Ascending aorta (tissue), 2 donors: ENCODE measurements at regions of chr4 and their contacts with region 1.

Region 1: GRCh38 chr4:38319456-38320342 is 344.3 kb upstream of the KLF3 start:
- DNase-seq: peak; percentile 75 to 97
- H3K4me3 ChIP-seq: peak overlapping the region; percentile 46 to 52
- H3K27ac ChIP-seq: peak overlapping the region; percentile 83 to 87
- H3K4me1 ChIP-seq: peaks cover 9 to 15% of the 10 kb centered on the region in 2 donors
- H3K27me3 ChIP-seq: no peaks in the 10 kb centered on the region
- CTCF ChIP-seq: peak; percentile 96 to 100 (median 99)

Region 2: DNA sequence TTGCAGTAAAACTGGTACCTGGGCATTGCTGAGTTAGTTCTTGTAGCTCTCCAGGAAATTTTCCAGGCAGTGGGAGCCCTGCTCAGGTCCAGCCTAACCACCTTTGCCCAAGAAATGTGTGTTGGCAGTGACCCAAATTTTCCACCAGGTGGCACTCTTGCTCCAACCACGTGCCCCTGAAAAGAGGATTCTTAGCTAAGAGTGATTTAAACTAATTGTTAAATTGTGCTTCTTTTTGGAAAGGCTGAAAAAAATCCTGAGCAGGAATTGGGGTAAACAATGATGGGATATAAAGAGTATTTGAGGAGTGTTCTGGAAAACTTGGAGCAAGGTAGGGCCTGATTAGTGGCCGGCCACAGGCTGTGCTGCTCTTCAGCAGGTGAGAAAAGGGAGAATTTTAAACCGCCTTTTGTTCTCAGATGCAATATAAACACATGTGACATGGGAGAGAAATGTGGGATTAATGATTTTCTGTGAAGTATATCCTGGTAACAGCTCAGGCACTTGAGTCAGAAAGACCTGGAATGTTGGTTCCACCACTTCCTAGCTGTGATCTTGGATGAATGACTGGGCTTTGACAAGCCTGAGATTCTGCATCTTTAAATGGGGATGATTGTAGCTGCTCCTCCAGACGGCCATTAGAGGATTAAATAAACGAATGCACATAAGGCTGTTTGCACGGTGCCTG is 139.9 kb before region 1 on chr4:
- intact Hi-C with region 1: loop called (anchors 2 kb)
- DNase-seq: peak in 1 of 2 donors; percentile 90
- H3K4me3 ChIP-seq: no peak overlapping the region
- H3K27ac ChIP-seq: no peak overlapping the region
- H3K4me1 ChIP-seq: peaks cover 4% of the 10 kb centered on the region in 2 donors
- H3K27me3 ChIP-seq: no peaks in the 10 kb centered on the region
- CTCF ChIP-seq: peak; percentile 88 to 94 (median 88)

Region 3: DNA sequence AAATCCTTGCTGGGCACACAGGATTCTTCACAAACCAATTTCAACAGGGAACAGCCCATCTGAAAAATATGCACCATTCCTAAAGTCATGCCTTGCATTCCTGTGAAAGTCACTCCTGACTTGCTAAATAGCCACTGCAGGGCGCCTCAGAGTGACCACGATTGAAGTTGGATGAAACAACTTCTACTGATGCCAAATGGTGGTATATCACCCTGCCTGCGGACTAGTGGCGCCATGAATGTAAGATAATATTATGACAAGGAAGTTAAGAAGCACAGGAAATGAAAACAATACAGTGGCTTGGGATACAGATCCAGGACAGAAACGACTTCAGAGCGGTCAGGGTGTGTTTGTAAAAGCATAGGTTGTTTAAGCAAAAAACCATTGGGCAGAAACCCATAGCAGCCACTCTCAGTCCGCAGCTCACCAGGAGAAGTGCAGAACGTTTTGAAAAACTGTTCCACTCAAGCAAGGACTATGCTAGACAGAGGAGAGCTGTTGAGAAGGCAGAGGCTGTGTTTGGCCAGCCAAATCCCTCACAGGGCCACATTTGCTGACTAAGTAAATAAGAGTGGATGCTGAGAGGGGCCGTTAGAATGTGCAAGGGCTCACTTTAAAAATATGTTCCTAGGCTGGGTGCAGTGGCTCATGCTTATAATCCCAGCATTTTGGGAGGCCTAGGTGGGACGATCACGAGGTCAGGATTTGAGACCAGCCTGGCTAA is 109.1 kb before region 1 on chr4:
- intact Hi-C with region 1: loop called (anchors 2 kb)
- DNase-seq: peak in 1 of 2 donors; percentile 72
- H3K4me3 ChIP-seq: peak overlapping the region in 1 of 2 donors; percentile 21
- H3K27ac ChIP-seq: peak overlapping the region; percentile 76 to 89
- H3K4me1 ChIP-seq: peaks cover 0 to 17% of the 10 kb centered on the region in 2 donors
- H3K27me3 ChIP-seq: no peaks in the 10 kb centered on the region
- CTCF ChIP-seq: no peak

Region 4: GRCh38 chr4:38430841-38431240 is 111.1 kb after region 1 on chr4:
- intact Hi-C with region 1: no loop called
- DNase-seq: no peak
- H3K4me3 ChIP-seq: no peak overlapping the region
- H3K27ac ChIP-seq: no peak overlapping the region
- H3K4me1 ChIP-seq: no peaks in the 10 kb centered on the region
- H3K27me3 ChIP-seq: no peaks in the 10 kb centered on the region
- CTCF ChIP-seq: no peak

Region 5: DNA sequence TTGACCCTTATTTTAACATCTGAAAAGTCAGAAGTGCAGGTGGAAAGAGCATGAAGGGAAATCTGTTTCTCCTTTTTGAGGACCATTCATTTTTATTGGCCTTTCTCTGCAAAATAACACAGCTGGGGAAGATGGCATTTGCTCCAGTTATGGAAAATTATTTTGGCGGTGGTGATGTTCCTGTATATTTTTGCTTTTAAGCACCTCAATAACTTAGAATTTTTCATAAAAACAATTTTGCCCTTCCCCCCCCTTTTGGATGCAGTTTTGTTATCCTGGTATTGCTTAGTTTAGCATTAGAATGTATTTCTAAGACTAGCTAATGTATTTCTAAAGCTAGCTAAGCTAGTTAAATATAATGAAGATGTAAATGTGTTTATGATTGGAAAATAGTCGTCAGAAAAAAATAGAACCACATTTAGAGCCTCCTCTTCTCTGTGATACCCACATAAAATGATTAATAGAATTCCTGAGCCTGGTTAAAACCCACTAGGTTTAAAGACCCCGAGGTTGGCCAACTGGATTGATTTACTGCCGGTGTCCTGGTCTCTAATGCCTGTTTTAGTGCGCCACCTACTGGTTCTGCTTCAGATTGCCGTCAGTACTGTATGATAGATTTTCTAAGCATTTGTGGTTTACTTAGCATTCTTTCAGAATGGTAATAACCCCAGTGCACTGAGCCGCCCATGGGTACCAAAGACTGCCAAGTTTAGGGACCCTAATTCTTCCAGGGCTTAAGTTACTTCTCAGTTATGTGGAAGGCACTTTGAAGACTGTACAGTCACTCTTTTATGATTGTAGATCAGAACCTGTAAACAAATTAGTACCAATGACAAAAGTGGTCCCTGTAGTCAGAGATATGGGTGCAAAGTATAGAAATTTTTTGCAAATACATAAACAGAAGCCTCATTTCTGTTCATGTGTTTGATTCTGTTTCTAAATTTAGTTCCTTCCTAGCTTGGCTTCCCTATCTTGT is 355.7 kb after region 1 on chr4:
- intact Hi-C with region 1: loop called (anchors 1 kb)
- DNase-seq: peak in 1 of 2 donors; percentile 92
- H3K4me3 ChIP-seq: peak overlapping the region in 1 of 2 donors; percentile 51
- H3K27ac ChIP-seq: peak overlapping the region; percentile 91 to 99
- H3K4me1 ChIP-seq: peaks cover 42 to 77% of the 10 kb centered on the region in 2 donors
- H3K27me3 ChIP-seq: no peaks in the 10 kb centered on the region
- CTCF ChIP-seq: peak; percentile 79 to 96 (median 90)